ENCODE measurements at regions of chr12 and their contacts with region 1.

Region 1: GRCh38 chr12:75738486-75738885 is 227.1 kb upstream of the KRR1 start:
- DNase-seq: peak; percentile 37
- H3K4me3 Mint-ChIP-seq: no peak overlapping the region
- H3K27ac Mint-ChIP-seq: no peak overlapping the region
- H3K4me1 Mint-ChIP-seq: peaks cover 16% of the 10 kb centered on the region
- H3K27me3 Mint-ChIP-seq: peaks cover 7% of the 10 kb centered on the region

Region 2: GRCh38 chr12:75658901-75659383 is 79.5 kb before region 1 on chr12:
- CTCF ChIA-PET with region 1: no interaction called
- intact Hi-C with region 1: no loop called
- DNase-seq: peak; percentile 16
- H3K4me3 Mint-ChIP-seq: no peak overlapping the region
- H3K27ac Mint-ChIP-seq: no peak overlapping the region
- H3K4me1 Mint-ChIP-seq: peaks cover 9% of the 10 kb centered on the region
- H3K27me3 Mint-ChIP-seq: peaks cover 2% of the 10 kb centered on the region

Region 3: GRCh38 chr12:75722714-75723200 is 15.7 kb before region 1 on chr12:
- CTCF ChIA-PET with region 1: interaction called, 3 read pairs
- intact Hi-C with region 1: loop called (anchors 1 kb)
- DNase-seq: peak; percentile 64
- H3K4me3 Mint-ChIP-seq: no peak overlapping the region
- H3K27ac Mint-ChIP-seq: peak overlapping the region; percentile 18
- H3K4me1 Mint-ChIP-seq: peaks cover 15% of the 10 kb centered on the region
- H3K27me3 Mint-ChIP-seq: peaks cover 6% of the 10 kb centered on the region

Measured in activated naive CD4-positive, alpha-beta T cell treated with anti-CD3 and anti-CD28 coated beads for 36 hours (primary cell).